Transverse colon (tissue), 4 donors: ENCODE measurements at regions of chr2 and their contacts with region 1.

Region 1: GRCh38 chr2:65974067-65974723 is 460.7 kb upstream of the MEIS1 start:
- DNase-seq: no peak
- H3K4me3 ChIP-seq: no peak overlapping the region
- H3K27ac ChIP-seq: no peak overlapping the region
- H3K4me1 ChIP-seq: no peaks in the 10 kb centered on the region
- H3K27me3 ChIP-seq: no peaks in the 10 kb centered on the region
- CTCF ChIP-seq: no peak
- EP300 ChIP-seq: no peak
- POLR2A ChIP-seq: no peak

Region 2: GRCh38 chr2:65604245-65604644 is 369.9 kb before region 1 on chr2:
- in situ Hi-C with region 1: no loop called
- intact Hi-C with region 1: no loop called
- DNase-seq: no peak
- H3K4me3 ChIP-seq: no peak overlapping the region
- H3K27ac ChIP-seq: no peak overlapping the region
- H3K4me1 ChIP-seq: peaks cover 0 to 8% (median 0%) of the 10 kb centered on the region in 4 donors
- H3K27me3 ChIP-seq: peaks cover 9% of the 10 kb centered on the region
- CTCF ChIP-seq: no peak
- EP300 ChIP-seq: no peak
- POLR2A ChIP-seq: no peak

Region 3: DNA sequence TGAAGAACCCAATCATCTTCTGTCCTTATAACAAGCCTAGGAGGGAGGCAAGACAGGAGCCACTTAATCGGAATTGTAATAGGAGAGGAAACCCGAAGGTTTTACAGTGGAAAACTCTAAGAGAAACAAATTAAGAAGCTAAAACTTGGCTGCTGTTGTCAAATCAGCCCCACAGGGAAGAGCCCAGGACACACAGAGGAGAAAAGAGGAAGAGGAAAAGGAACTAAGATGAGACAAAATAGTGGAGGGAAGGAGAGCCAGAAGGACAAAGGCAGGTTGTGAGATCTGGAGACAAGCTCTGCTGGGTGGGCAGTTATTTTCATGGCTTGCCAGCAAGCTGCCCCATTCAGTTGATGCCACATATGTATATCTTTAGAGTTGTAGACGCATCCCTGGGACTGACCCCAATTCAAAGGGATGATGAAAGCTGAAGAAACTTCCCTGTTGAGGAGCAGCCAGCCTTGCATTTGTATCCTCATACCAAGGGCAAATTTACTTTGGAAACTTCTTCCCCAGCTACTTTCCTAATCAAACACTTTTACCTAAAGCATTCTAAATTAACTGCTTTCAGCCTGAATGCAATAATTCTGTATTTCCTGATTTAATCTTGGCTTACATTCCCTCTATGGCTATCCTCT is 39.1 kb before region 1 on chr2:
- in situ Hi-C with region 1: no loop called
- intact Hi-C with region 1: no loop called
- DNase-seq: no peak
- H3K4me3 ChIP-seq: no peak overlapping the region
- H3K27ac ChIP-seq: no peak overlapping the region
- H3K4me1 ChIP-seq: no peaks in the 10 kb centered on the region
- H3K27me3 ChIP-seq: no peaks in the 10 kb centered on the region
- CTCF ChIP-seq: no peak
- EP300 ChIP-seq: no peak
- POLR2A ChIP-seq: no peak

Region 4: DNA sequence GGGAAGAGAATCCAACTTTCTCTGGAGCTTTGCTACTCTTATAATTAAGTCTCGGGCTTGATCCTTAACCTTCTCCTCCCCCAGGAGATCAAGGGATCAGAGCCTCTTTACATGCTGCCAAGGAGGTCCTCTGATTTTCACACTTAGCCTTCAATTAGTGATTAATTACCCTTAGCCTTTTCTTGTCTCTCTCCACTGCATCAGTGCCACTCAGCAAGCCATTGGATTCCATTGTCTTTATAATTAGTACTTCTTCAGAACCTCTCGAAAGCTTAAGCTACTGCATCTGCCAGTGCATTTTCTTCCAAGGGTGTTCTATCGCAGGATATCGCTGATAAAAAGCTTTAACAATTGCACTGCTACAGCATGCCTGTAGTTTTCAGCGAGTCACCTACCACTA is 16.3 kb before region 1 on chr2:
- in situ Hi-C with region 1: no loop called
- intact Hi-C with region 1: loop called (anchors 1 kb)
- DNase-seq: no peak
- H3K4me3 ChIP-seq: no peak overlapping the region
- H3K27ac ChIP-seq: no peak overlapping the region
- H3K4me1 ChIP-seq: no peaks in the 10 kb centered on the region
- H3K27me3 ChIP-seq: no peaks in the 10 kb centered on the region
- CTCF ChIP-seq: no peak
- EP300 ChIP-seq: no peak
- POLR2A ChIP-seq: no peak